Aorta (tissue), 5 donors: ENCODE measurements at regions of chr3 and their contacts with region 1.

Region 1: DNA sequence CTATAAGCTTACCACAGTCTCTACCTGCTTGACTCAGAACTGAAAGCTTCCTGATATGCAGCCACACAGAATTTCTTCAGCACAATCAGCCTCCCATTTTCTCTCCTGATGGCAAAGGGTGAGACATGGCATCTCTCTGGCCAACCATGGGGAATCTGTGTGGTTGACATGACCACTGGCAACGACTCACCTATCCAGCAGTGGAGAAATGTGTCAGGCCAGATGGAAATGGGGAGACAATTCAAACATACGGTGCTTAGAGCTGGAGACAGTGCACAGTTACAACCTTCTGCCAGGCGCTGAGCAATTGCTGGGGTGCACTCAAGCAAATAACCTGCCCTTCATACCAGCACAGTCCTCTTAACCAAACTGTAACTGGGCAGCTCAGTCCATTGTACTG is 3.6 kb downstream of the ZNF385D start:
- DNase-seq: no peak
- ATAC-seq: no peak
- H3K4me3 ChIP-seq: peak overlapping the region; percentile 100
- H3K27ac ChIP-seq: peak overlapping the region in 1 of 2 donors; percentile 94
- H3K4me1 ChIP-seq: peaks cover 4 to 7% of the 10 kb centered on the region in 2 donors
- H3K27me3 ChIP-seq: no peaks in the 10 kb centered on the region

Region 2: DNA sequence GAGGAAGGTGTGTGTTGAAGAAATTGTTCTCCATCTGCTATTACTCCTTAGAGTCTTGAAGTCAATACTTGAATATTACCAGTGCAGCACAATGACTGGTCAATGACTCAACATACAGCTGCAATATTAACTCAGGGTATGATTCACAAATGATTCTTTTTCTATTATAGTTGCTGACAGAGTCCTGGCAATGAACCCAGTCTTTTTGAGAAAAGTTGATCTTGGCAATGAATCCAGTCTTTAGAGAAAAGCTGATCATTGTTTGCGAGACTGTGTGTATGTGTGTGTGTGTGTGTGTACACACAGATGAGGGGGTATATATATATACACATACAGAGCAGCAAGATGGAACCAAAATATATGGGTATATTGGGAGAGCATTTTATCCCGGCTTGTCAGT is 311.5 kb before region 1 on chr3:
- intact Hi-C with region 1: loop called in 1 of 2 experiments (anchors 10 kb)
- DNase-seq: no peak
- ATAC-seq: no peak
- H3K4me3 ChIP-seq: no peak overlapping the region
- H3K27ac ChIP-seq: no peak overlapping the region
- H3K4me1 ChIP-seq: peaks cover 0 to 4% of the 10 kb centered on the region in 2 donors
- H3K27me3 ChIP-seq: no peaks in the 10 kb centered on the region

Region 3: DNA sequence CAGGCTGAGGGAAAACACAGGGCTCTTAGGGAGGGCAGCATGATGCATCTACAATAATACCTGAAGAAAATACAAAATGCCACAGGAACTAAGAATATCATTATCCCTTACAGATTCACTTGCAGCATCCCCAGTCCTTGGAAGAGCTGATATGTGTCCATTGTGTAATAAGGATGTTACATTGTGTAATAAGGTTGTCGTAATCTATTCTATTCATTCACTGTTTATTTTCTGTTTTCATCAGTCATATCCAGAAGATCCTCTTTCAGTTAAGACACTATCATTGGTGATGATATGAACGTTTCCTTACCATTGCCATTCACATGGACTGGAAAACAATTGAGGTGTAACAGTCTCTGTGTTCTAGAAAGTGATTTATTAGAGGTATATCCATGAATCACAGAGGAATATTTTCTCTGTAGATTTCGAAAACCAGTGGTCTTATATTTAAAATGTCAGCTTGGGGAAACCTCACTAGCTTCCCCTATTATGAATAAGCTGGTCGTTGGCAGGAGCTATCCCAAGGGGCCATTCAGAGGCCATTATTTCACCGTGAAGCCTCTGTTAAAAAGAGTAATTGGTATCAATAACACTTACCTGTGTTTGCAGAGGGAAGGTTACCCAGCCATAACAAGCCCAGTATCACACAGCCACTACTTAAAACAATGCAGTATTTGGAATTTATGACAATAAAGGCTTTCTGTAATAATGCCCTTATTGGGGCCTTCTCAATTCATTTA is 237.5 kb before region 1 on chr3:
- intact Hi-C with region 1: loop called in 1 of 2 experiments (anchors 5 kb)
- DNase-seq: no peak
- ATAC-seq: no peak
- H3K4me3 ChIP-seq: no peak overlapping the region
- H3K27ac ChIP-seq: no peak overlapping the region
- H3K4me1 ChIP-seq: no peaks in the 10 kb centered on the region
- H3K27me3 ChIP-seq: no peaks in the 10 kb centered on the region

Region 4: GRCh38 chr3:21645121-21645897 is 102.1 kb before region 1 on chr3:
- intact Hi-C with region 1: loop called in 1 of 2 experiments (anchors 5 kb)
- DNase-seq: peak; percentile 85 to 86
- ATAC-seq: peak; percentile 84
- H3K4me3 ChIP-seq: peak overlapping the region; percentile 6 to 43
- H3K27ac ChIP-seq: peak overlapping the region; percentile 73 to 84
- H3K4me1 ChIP-seq: peaks cover 0 to 15% of the 10 kb centered on the region in 2 donors
- H3K27me3 ChIP-seq: no peaks in the 10 kb centered on the region

Region 5: DNA sequence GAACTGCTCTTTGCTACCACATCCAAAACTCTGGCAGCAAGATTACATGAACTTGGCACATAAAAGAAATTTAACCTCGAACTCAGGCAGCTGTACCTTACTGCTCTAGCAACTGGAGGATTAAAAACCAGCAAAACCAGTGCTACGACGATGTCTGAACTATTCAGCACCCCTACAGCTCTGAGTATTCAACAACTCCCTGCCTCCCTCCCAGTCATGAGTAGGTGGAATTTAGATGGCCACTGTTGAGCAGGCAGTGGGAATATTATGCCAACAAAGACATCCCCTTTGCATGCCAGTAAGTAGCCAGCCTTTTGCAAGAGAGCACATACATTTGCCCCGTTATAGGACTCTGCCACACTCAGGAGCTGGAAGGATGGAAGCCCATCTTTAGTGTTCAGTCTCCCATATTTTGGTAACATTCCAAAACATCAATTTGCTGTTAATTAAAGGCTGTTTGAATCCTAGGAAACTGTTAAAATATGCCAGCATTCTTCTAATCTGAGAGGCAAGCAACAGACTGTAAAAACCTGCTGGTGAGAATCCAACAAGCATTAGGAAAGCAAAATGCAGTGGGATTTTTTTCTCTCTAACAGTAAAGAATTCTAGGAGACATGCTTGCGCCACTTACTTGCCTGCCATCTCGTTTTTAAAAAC is 81.8 kb before region 1 on chr3:
- intact Hi-C with region 1: no loop called
- DNase-seq: no peak
- ATAC-seq: no peak
- H3K4me3 ChIP-seq: no peak overlapping the region
- H3K27ac ChIP-seq: peak overlapping the region in 1 of 2 donors; percentile 25
- H3K4me1 ChIP-seq: peaks cover 5 to 14% of the 10 kb centered on the region in 2 donors
- H3K27me3 ChIP-seq: no peaks in the 10 kb centered on the region

Region 6: DNA sequence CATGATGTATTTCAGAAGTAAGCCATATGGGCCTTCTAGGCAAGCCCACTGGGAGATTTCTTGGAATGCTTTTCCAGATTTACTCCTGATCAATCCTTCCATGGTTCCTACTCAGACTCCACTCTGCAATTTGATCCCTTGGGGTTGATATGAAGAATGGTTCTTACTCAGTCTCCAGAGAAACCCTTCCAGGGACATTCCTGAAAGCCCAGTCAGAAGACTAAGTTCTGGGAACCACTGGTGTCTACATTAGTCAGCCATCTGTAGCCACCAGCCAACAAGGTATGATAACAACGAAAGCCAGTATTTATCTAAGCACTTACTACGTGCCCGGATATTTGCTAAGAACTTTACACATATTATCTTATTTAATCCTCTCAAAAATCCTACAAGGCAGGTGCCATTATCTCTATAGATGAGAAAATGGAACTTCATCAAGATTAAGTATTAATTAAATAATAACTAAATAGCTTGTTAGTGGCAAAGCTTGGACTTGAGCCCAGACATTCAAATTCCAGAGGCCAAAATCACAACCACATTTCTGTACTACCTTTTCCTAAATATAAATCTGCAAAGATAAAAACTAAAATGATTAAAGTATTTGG is 29.1 kb before region 1 on chr3:
- intact Hi-C with region 1: loop called in 1 of 2 experiments (anchors 2 kb)
- DNase-seq: no peak
- ATAC-seq: peak; percentile 83
- H3K4me3 ChIP-seq: no peak overlapping the region
- H3K27ac ChIP-seq: peak overlapping the region; percentile 81 to 82
- H3K4me1 ChIP-seq: peaks cover 11 to 30% of the 10 kb centered on the region in 2 donors
- H3K27me3 ChIP-seq: no peaks in the 10 kb centered on the region